ENCODE measurements at regions of chr17 and their contacts with region 1.

Region 1: DNA sequence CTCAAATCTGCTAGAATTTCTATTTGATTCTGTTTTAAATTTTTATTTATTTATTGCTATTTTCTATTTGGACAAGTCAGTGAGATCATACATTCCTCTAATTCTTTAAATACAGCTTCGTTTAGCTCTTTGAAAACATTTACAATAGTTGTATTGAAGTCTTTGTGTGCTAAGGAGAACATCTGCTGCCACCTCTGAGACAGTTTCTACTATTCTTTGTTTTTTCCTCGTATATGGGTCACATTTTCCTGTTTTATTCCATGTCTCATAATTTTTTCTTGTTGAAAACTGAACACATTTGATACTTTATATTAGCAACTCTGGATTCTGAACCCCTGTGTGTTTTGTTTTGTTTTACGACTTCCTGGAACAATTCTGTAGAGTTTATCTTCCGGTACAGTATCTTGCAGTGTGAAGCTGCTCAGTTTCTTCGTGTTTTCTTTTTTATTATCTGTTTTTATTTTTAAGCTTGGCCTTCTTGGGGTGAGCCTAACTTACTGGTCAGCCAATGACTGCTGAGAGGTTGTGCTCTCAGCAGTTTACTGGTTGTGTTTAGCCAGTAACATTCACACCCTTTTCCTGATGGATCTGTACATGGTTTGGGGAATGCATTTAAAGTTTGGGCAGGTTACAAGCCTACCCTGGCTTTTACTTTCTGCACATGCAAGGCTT is 99.0 kb downstream of the CA4 start:
- DNase-seq: no peak
- H3K4me3 ChIP-seq: no peak overlapping the region
- H3K27ac ChIP-seq: no peak overlapping the region
- H3K4me1 ChIP-seq: no peaks in the 10 kb centered on the region
- H3K27me3 ChIP-seq: no peaks in the 10 kb centered on the region
- CTCF ChIP-seq: no peak

Region 2: GRCh38 chr17:58643140-58643539 is 1605.6 kb before region 1 on chr17:
- CTCF ChIA-PET with region 1: no interaction called
- dilution Hi-C with region 1: no loop called
- in situ Hi-C with region 1: no loop called
- intact Hi-C with region 1: no loop called
- DNase-seq: peak; percentile 46
- H3K4me3 ChIP-seq: no peak overlapping the region
- H3K27ac ChIP-seq: no peak overlapping the region
- H3K4me1 ChIP-seq: no peaks in the 10 kb centered on the region
- H3K27me3 ChIP-seq: no peaks in the 10 kb centered on the region
- CTCF ChIP-seq: no peak

Region 3: DNA sequence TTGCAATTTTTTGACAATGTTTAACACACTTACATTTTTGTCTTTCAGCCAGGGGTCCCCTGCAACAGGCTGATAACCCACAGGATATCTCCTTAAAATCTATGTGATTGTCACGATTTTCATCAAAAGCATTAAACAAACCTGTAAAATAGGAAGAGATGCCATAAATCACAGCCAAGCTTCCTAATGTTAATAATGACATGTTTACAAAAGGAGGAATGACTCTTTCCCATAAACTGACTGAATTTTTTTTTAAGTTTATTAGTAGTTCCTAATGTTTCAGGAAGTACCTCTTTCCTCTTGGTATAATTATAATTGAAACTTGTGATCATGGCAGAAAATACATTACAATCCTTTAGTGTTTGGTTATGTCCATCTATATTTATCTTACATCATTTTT is 20.7 kb after region 1 on chr17:
- CTCF ChIA-PET with region 1: interaction called, 14 read pairs
- dilution Hi-C with region 1: no loop called
- in situ Hi-C with region 1: no loop called
- intact Hi-C with region 1: no loop called
- DNase-seq: no peak
- H3K4me3 ChIP-seq: no peak overlapping the region
- H3K27ac ChIP-seq: no peak overlapping the region
- H3K4me1 ChIP-seq: peaks cover 10% of the 10 kb centered on the region
- H3K27me3 ChIP-seq: no peaks in the 10 kb centered on the region
- CTCF ChIP-seq: no peak